Mucosa of descending colon (tissue), 3 donors: ENCODE measurements at regions of chr19 and their contacts with region 1.

Region 1: DNA sequence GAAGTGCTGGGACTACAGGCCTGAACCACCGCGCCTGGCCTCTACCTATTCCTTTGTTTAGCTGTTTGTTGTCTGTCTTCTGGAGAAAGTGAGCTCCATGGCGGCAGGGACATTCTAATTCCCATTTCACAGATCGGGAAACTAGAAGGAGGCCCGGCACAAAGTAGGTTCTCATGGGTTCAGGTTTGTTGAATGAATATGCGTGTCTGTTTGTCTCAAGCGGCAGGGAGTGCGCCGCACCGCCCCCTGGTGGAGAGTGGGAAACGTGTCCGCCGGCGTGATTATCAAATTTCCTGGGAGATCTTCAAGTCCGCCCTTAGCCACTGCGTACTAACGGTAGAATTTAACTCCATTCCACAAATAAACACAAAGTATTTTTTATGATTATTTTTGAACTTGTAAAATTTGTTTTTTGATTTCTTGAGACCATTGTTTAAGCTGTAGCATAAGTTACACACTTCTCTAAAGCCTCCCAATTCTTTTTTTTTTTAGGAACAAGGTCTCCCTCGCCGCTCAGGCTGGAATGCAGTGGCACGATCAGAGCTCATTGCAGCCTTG is 8.9 kb upstream of the CCDC9 start:
- DNase-seq: peak; percentile 82 to 87 (median 82)
- ATAC-seq: peak; percentile 46
- H3K4me3 ChIP-seq: no peak overlapping the region
- H3K4me1 ChIP-seq: peaks cover 13% of the 10 kb centered on the region
- CTCF ChIP-seq: peak; percentile 83

Region 2: DNA sequence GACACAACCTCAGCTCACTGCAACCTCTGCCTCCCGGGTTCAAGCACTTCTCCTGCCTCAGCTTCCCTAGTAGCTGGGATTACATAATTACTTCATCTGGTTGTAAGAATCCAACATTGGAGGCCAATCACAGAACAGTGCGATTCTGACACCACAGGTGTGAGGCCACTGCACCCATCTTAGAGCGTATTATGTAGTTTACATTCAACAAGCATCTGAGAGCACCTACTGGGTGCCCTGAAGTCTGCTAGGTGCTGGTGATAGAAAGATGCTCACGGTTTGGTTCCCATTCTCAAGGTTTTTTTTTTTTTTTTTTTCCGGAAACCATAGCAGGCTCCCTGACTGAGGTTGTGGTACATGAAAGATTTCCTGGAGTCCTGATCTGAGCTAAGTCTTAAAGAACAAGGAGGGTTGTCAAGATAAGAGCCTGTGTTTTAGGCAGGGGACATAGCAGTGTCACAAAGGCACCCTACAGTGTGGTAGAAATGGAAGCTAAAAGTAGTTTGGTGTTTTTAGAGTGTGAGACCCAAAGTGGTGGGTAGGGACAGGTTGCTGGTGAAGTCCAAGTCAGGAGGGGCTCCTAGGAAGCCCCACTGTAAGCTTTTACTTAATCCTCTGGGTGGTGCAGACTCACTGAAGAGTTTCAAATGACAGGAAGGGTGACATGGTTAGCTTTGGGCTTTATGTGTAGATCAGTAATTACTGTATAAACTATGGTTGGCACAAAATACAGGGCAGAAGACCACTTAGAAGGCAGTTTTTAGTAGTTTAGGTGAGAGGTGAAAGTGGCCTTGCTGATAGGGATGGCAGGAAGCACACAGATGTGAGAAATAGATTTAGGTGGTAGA is 101.5 kb before region 1 on chr19:
- intact Hi-C with region 1: loop called (anchors 5 kb)
- DNase-seq: no peak
- ATAC-seq: no peak
- H3K4me3 ChIP-seq: no peak overlapping the region
- H3K4me1 ChIP-seq: no peaks in the 10 kb centered on the region
- CTCF ChIP-seq: no peak

Region 3: GRCh38 chr19:47152224-47153017 is 95.0 kb before region 1 on chr19:
- intact Hi-C with region 1: loop called (anchors 5 kb)
- DNase-seq: peak in 1 of 3 donors; percentile 41
- ATAC-seq: peak; percentile 64
- H3K4me3 ChIP-seq: no peak overlapping the region
- H3K4me1 ChIP-seq: peaks cover 35% of the 10 kb centered on the region
- CTCF ChIP-seq: no peak

Region 4: DNA sequence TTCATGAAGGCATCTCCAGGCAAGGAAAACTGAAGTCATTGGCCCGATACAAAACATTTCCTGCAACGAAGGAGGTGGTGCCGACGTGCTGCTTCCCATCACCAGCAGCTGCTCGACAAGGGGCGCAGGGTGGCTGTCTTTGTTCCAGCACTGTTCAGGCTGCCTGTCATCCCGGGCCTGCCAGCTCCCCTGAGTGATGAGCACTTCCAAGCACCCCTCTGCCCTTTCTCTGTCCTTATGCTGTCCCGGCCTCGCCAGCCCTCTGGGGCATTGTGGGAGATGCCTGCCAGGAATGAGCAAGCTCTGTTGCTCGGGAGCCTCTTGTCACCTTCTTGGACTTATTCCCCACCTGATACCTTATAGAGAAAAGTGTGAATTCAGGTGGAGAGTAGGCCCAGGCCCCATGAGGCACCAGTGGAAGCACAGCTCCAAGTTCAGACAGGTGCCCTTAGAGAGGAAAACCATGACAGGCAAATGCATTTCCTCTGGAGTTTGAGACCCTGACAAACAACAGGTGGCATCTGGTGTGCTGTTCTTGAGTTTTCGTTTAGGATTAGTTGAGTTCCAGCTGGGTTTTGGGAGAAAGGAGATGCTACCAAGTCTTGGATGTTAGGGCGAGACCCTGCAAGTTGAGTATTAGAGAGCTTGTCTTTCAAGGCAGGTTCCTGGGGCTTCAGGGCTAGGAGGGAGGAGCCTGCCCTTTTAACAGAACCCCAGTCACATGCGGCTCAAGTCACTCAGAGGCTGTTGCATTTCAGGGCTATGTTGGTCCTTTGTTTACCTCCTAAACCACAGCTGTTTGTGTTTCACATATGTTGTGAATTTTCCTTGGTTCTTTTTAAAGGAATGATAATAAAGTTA is 37.9 kb before region 1 on chr19:
- intact Hi-C with region 1: loop called in 1 of 2 experiments (anchors 5 kb)
- DNase-seq: peak in 1 of 3 donors; percentile 39
- ATAC-seq: no peak
- H3K4me3 ChIP-seq: no peak overlapping the region
- H3K4me1 ChIP-seq: peaks cover 8% of the 10 kb centered on the region
- CTCF ChIP-seq: no peak

Region 5: GRCh38 chr19:47296036-47296435 is 48.6 kb after region 1 on chr19:
- intact Hi-C with region 1: no loop called
- DNase-seq: peak in 2 of 3 donors; percentile 58 to 97
- ATAC-seq: peak; percentile 99
- H3K4me3 ChIP-seq: no peak overlapping the region
- H3K4me1 ChIP-seq: no peaks in the 10 kb centered on the region
- CTCF ChIP-seq: peak; percentile 57

Region 6: DNA sequence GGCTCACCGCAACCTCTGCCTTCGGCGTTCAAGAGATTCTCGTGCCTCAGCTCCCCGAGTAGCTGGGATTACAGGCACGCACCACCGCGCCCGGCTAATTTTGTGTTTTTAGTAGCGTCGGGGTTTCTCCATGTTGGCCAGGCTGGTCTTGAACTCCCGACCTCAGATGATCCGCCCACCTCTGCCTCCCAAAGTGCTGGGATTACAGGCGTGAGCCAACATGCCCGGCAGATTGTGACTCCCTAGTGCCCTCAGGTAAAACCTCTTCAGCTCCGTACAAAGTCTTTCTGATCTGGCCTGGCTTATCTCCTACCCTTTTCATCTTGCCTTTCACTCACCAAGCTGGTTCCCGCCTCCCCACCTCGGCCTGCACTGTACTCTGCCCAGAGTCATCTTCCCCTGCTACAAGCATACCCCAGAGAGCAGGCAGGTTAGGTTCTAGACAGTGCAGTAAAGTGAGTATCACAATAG is 376.5 kb after region 1 on chr19:
- intact Hi-C with region 1: no loop called
- DNase-seq: no peak
- ATAC-seq: peak; percentile 59
- H3K4me3 ChIP-seq: no peak overlapping the region
- H3K4me1 ChIP-seq: peaks cover 17% of the 10 kb centered on the region
- CTCF ChIP-seq: no peak